Naive thymus-derived CD4-positive, alpha-beta T cell (primary cell): ENCODE measurements at regions of chr14 and their contacts with region 1.

Region 1: DNA sequence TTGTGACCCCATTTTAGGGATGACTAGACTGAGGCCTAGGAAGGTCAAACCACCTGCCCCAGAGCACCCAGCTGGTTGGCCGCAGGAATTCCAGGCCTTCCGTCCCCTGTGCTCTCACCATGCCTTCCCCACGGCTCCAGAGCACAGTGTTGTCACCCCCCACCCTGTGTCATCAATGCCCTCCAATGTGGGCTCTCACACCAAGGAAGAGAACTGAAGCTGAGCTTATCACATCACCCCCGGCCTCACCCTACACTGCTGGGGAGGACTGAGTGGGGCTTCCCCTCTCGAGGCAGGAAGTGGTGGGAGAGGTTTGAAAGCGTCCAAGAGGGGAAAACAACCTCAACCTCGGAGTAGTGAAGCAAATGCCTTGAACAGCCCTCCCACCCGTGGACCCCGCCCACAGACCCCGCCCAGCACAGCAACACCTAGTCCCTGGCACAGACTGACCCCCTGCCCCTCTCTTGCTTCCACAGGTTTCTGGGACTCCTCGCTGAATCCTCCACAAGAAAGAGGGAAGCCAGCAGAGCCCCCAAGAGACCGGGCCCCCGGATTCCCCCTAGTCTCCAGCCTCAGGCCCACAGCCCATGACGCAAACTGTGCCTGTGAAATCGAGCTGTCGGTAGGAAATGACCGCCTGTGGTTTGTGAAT is 97.2 kb downstream of the LGMN start:
- DNase-seq: peak; percentile 50 to 91 (median 87)
- ATAC-seq: peak; percentile 89
- H3K4me3 ChIP-seq: peak overlapping the region; percentile 82
- H3K4me3 Mint-ChIP-seq: peak overlapping the region; percentile 99 to 100 (median 100)
- H3K27ac ChIP-seq: peak overlapping the region; percentile 90
- H3K27ac Mint-ChIP-seq: peak overlapping the region; percentile 94 to 100 (median 99)
- H3K4me1 ChIP-seq: peaks cover 57 to 58% of the 10 kb centered on the region in 2 donors
- H3K4me1 Mint-ChIP-seq: peaks cover 65 to 82% (median 70%) of the 10 kb centered on the region in 7 donors
- H3K27me3 ChIP-seq: no peaks in the 10 kb centered on the region
- H3K27me3 Mint-ChIP-seq: no peaks in the 10 kb centered on the region

Region 2: GRCh38 chr14:92106143-92106926 is 544.9 kb before region 1 on chr14 and contains the start of gene ATXN3:
- CTCF ChIA-PET with region 1: no interaction called
- POLR2A ChIA-PET with region 1: interaction called, 3 read pairs
- intact Hi-C with region 1: loop called in 1 of 2 experiments (anchors 1 kb)
- DNase-seq: peak; percentile 75 to 97 (median 93)
- ATAC-seq: peak; percentile 95
- H3K4me3 ChIP-seq: peak within 1 kb of the TSS; percentile 82
- H3K4me3 Mint-ChIP-seq: peak within 1 kb of the TSS; percentile 88 to 100 (median 98)
- H3K27ac ChIP-seq: peak within 1 kb of the TSS; percentile 91
- H3K27ac Mint-ChIP-seq: peak within 1 kb of the TSS; percentile 82 to 96 (median 92)
- H3K4me1 ChIP-seq: peaks cover 5 to 17% of the 10 kb centered on the region in 2 donors
- H3K4me1 Mint-ChIP-seq: peaks cover 39 to 72% (median 61%) of the 10 kb centered on the region in 7 donors
- H3K27me3 ChIP-seq: no peaks in the 10 kb centered on the region
- H3K27me3 Mint-ChIP-seq: no peaks in the 10 kb centered on the region
- total RNA-seq, gene ATXN3: 27.8 to 54.9 (median 36.9) TPM

Region 3: DNA sequence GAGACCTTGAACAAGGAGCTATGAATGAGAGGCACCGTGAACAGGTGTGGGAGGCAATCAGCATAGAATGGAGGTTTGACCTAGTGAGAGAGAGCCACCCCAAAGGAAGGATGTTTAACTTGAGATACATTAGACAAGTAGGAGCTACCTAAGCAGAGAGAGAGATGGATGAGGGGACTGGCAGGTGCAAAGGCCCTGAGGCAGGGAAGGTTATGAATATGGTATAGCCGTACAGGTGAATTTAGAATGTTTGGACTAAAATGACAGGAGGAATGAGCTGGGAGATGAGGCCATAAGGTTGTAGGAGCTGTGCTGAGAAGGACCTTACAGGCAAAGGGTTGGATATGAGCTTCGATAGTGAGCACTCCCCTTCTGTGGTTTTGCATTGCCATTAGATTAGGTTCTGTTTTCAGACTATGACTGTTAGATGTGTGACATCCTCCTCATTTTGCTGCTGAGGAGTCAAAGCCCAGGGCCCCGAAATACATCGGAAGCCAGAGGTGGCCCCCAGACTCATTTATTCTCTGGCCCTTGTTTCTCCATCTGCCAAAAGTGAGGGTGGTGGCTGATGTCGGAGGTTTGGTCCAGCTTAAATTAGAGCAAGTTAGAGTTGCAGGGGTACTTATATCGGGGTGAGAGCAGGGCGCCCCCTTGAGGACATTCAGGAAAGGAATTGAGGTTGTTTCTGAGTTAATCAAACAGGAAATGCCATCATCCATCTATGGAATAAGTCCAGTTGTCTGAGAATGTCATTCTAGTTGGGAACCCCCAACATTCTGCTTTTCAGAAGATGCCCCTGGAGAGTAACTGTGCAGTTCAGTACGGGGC is 298.9 kb before region 1 on chr14:
- CTCF ChIA-PET with region 1: no interaction called
- POLR2A ChIA-PET with region 1: no interaction called
- intact Hi-C with region 1: no loop called
- DNase-seq: peak in 2 of 9 donors; percentile 6 to 33
- ATAC-seq: no peak
- H3K4me3 ChIP-seq: no peak overlapping the region
- H3K4me3 Mint-ChIP-seq: no peak overlapping the region
- H3K27ac ChIP-seq: no peak overlapping the region
- H3K27ac Mint-ChIP-seq: no peak overlapping the region
- H3K4me1 ChIP-seq: no peaks in the 10 kb centered on the region
- H3K4me1 Mint-ChIP-seq: peaks cover 0 to 6% (median 0%) of the 10 kb centered on the region in 7 donors
- H3K27me3 ChIP-seq: no peaks in the 10 kb centered on the region
- H3K27me3 Mint-ChIP-seq: peaks cover 0 to 39% (median 4%) of the 10 kb centered on the region in 5 donors

Region 4: DNA sequence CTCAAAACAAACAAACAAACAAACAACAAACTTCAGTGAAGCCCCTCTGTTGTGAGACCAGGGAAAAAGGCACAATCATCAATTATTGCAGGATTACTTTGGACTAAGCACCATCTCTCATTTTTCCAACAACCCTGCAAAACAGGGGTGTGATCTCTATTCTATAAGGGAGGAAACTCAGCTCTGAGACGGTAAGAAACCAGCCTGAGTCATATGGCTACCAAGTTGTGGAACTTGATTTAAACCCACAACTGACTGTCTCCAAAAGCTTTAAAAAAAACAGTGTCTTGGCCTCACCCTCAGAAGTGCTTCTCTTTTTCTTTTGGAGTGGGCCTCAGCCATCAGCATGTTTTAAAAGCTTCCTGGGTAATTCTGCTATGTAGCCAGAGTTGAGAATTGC is 87.9 kb before region 1 on chr14:
- CTCF ChIA-PET with region 1: no interaction called
- POLR2A ChIA-PET with region 1: no interaction called
- intact Hi-C with region 1: loop called in 1 of 2 experiments (anchors 5 kb)
- DNase-seq: no peak
- ATAC-seq: peak; percentile 66
- H3K4me3 ChIP-seq: no peak overlapping the region
- H3K4me3 Mint-ChIP-seq: peak overlapping the region in 1 of 10 donors; percentile 10
- H3K27ac ChIP-seq: no peak overlapping the region
- H3K27ac Mint-ChIP-seq: peak overlapping the region in 2 of 9 donors; percentile 21 to 68
- H3K4me1 ChIP-seq: peaks cover 5 to 9% of the 10 kb centered on the region in 2 donors
- H3K4me1 Mint-ChIP-seq: peaks cover 15 to 64% (median 38%) of the 10 kb centered on the region in 7 donors
- H3K27me3 ChIP-seq: no peaks in the 10 kb centered on the region
- H3K27me3 Mint-ChIP-seq: no peaks in the 10 kb centered on the region

Region 5: GRCh38 chr14:92612988-92613658 is 38.1 kb before region 1 on chr14:
- CTCF ChIA-PET with region 1: interaction called, 101 read pairs
- POLR2A ChIA-PET with region 1: interaction called, 341 read pairs
- intact Hi-C with region 1: loop called (anchors 1 kb)
- DNase-seq: peak; percentile 50 to 82 (median 63)
- ATAC-seq: peak; percentile 53
- H3K4me3 ChIP-seq: no peak overlapping the region
- H3K4me3 Mint-ChIP-seq: peak overlapping the region in 5 of 10 donors; percentile 15 to 50 (median 41)
- H3K27ac ChIP-seq: no peak overlapping the region
- H3K27ac Mint-ChIP-seq: peak overlapping the region in 8 of 9 donors; percentile 10 to 89 (median 52)
- H3K4me1 ChIP-seq: peaks cover 46 to 57% of the 10 kb centered on the region in 2 donors
- H3K4me1 Mint-ChIP-seq: peaks cover 53 to 77% (median 70%) of the 10 kb centered on the region in 7 donors
- H3K27me3 ChIP-seq: no peaks in the 10 kb centered on the region
- H3K27me3 Mint-ChIP-seq: no peaks in the 10 kb centered on the region

Region 6: GRCh38 chr14:92670160-92670559 is 18.9 kb after region 1 on chr14:
- CTCF ChIA-PET with region 1: interaction called, 6 read pairs
- POLR2A ChIA-PET with region 1: interaction called, 47 read pairs
- intact Hi-C with region 1: loop called in 1 of 2 experiments (anchors 1 kb)
- DNase-seq: no peak
- ATAC-seq: peak; percentile 29
- H3K4me3 ChIP-seq: no peak overlapping the region
- H3K4me3 Mint-ChIP-seq: peak overlapping the region in 3 of 10 donors; percentile 14 to 36 (median 29)
- H3K27ac ChIP-seq: peak overlapping the region; percentile 39
- H3K27ac Mint-ChIP-seq: peak overlapping the region; percentile 35 to 91 (median 81)
- H3K4me1 ChIP-seq: peaks cover 0 to 37% of the 10 kb centered on the region in 2 donors
- H3K4me1 Mint-ChIP-seq: peaks cover 51 to 93% (median 82%) of the 10 kb centered on the region in 7 donors
- H3K27me3 ChIP-seq: no peaks in the 10 kb centered on the region
- H3K27me3 Mint-ChIP-seq: no peaks in the 10 kb centered on the region

Region 7: GRCh38 chr14:92704036-92704804 is 53.0 kb after region 1 on chr14:
- CTCF ChIA-PET with region 1: no interaction called
- POLR2A ChIA-PET with region 1: no interaction called
- intact Hi-C with region 1: no loop called
- DNase-seq: no peak
- ATAC-seq: peak; percentile 85
- H3K4me3 ChIP-seq: no peak overlapping the region
- H3K4me3 Mint-ChIP-seq: no peak overlapping the region
- H3K27ac ChIP-seq: no peak overlapping the region
- H3K27ac Mint-ChIP-seq: no peak overlapping the region
- H3K4me1 ChIP-seq: no peaks in the 10 kb centered on the region
- H3K4me1 Mint-ChIP-seq: peaks cover 0 to 17% (median 0%) of the 10 kb centered on the region in 7 donors
- H3K27me3 ChIP-seq: no peaks in the 10 kb centered on the region
- H3K27me3 Mint-ChIP-seq: peaks cover 0 to 9% (median 0%) of the 10 kb centered on the region in 5 donors

Region 8: GRCh38 chr14:92719890-92720323 is 68.7 kb after region 1 on chr14:
- CTCF ChIA-PET with region 1: no interaction called
- POLR2A ChIA-PET with region 1: no interaction called
- intact Hi-C with region 1: no loop called
- DNase-seq: no peak
- ATAC-seq: no peak
- H3K4me3 ChIP-seq: no peak overlapping the region
- H3K4me3 Mint-ChIP-seq: no peak overlapping the region
- H3K27ac ChIP-seq: no peak overlapping the region
- H3K27ac Mint-ChIP-seq: no peak overlapping the region
- H3K4me1 ChIP-seq: no peaks in the 10 kb centered on the region
- H3K4me1 Mint-ChIP-seq: peaks cover 0 to 8% (median 0%) of the 10 kb centered on the region in 7 donors
- H3K27me3 ChIP-seq: no peaks in the 10 kb centered on the region
- H3K27me3 Mint-ChIP-seq: peaks cover 0 to 8% (median 0%) of the 10 kb centered on the region in 5 donors

Region 9: GRCh38 chr14:92793709-92794546 is 142.7 kb after region 1 on chr14 and contains the start of gene GOLGA5:
- CTCF ChIA-PET with region 1: no interaction called
- POLR2A ChIA-PET with region 1: interaction called, 3 read pairs
- intact Hi-C with region 1: loop called in 1 of 2 experiments (anchors 2 kb)
- DNase-seq: peak; percentile 97 to 100 (median 99)
- ATAC-seq: peak; percentile 97
- H3K4me3 ChIP-seq: peak within 1 kb of the TSS; percentile 98
- H3K4me3 Mint-ChIP-seq: peak within 1 kb of the TSS; percentile 78 to 96 (median 92)
- H3K27ac ChIP-seq: peak within 1 kb of the TSS; percentile 91
- H3K27ac Mint-ChIP-seq: peak within 1 kb of the TSS; percentile 78 to 98 (median 95)
- H3K4me1 ChIP-seq: peaks cover 15 to 20% of the 10 kb centered on the region in 2 donors
- H3K4me1 Mint-ChIP-seq: peaks cover 24 to 45% (median 39%) of the 10 kb centered on the region in 7 donors
- H3K27me3 ChIP-seq: no peaks in the 10 kb centered on the region
- H3K27me3 Mint-ChIP-seq: peaks cover 0 to 9% (median 0%) of the 10 kb centered on the region in 5 donors
- total RNA-seq, gene GOLGA5: 9.7 to 25.8 (median 23.5) TPM

Region 10: DNA sequence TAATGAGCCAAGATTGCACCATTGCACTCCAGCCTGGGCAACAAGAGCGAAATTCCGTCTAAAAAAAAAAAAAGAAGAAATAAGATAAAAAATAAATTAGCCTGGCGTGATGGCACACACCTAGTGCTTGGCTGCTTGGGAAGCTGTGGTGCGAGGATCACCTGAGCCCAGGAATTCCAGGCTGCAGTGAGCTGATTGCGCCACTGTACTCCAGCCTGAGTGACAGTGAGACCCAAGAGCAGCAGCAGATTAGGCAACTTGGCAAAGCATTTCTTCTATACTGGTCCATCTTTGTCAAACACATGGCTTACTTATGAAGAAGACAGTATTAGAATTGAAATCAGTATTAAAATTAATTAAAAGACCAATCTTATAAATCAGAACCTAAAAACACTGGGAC is 549.3 kb after region 1 on chr14:
- CTCF ChIA-PET with region 1: no interaction called
- POLR2A ChIA-PET with region 1: no interaction called
- intact Hi-C with region 1: no loop called
- DNase-seq: no peak
- ATAC-seq: no peak
- H3K4me3 ChIP-seq: no peak overlapping the region
- H3K4me3 Mint-ChIP-seq: no peak overlapping the region
- H3K27ac ChIP-seq: no peak overlapping the region
- H3K27ac Mint-ChIP-seq: no peak overlapping the region
- H3K4me1 ChIP-seq: peaks cover 7 to 9% of the 10 kb centered on the region in 2 donors
- H3K4me1 Mint-ChIP-seq: peaks cover 4 to 32% (median 20%) of the 10 kb centered on the region in 7 donors
- H3K27me3 ChIP-seq: no peaks in the 10 kb centered on the region
- H3K27me3 Mint-ChIP-seq: no peaks in the 10 kb centered on the region